HEK293 (cell line): ENCODE measurements at regions of chr22 and their contacts with region 1.

Region 1: DNA sequence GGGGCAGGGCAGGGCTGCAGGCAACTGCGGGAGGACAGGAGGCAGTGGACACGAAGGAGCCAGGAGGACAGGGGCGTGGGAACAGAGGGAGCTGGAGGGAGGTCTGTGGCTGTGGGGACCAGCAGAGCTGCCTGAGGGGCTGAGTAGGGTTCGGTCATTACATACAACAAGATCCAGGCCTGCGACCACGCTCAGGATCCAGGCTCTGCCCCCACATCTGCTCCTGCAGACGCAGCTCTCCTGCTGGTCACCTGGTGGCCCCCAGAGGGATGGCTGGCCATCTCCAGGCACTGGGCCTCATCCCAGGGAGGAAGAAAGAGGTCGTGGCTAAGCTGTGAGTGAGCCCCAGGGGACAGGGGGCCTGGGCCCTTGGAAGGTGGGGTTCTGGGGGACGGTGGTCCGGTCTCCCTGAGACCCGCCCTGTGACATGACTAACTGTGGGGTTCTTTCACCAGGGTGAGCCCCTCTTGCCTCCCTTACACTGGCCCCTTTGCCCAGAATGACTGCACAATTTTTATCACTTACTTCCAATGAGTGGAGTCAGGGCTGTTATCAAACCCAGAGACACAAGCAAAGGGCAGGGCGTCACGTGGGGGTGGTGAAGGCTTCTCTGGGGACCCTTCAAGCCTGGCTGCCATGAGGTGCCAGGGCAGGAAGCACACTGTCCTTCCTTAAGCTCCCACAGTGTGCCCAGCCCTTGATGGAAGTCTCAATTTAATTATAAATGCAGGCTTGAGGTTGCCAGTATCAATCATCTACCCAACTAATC is 6.7 kb upstream of the APOBEC3A start:
- H3K4me3 ChIP-seq: no peak overlapping the region
- H3K27ac ChIP-seq: no peak overlapping the region
- H3K4me1 ChIP-seq: no peaks in the 10 kb centered on the region
- CTCF ChIP-seq: no peak

Region 2: GRCh38 chr22:38973289-38974169 is 22.8 kb after region 1 on chr22:
- CTCF ChIA-PET with region 1: interaction called, 10 read pairs
- POLR2A ChIA-PET with region 1: no interaction called
- H3K4me3 ChIP-seq: no peak overlapping the region
- H3K27ac ChIP-seq: no peak overlapping the region
- H3K4me1 ChIP-seq: no peaks in the 10 kb centered on the region
- CTCF ChIP-seq: peak; percentile 77

Region 3: DNA sequence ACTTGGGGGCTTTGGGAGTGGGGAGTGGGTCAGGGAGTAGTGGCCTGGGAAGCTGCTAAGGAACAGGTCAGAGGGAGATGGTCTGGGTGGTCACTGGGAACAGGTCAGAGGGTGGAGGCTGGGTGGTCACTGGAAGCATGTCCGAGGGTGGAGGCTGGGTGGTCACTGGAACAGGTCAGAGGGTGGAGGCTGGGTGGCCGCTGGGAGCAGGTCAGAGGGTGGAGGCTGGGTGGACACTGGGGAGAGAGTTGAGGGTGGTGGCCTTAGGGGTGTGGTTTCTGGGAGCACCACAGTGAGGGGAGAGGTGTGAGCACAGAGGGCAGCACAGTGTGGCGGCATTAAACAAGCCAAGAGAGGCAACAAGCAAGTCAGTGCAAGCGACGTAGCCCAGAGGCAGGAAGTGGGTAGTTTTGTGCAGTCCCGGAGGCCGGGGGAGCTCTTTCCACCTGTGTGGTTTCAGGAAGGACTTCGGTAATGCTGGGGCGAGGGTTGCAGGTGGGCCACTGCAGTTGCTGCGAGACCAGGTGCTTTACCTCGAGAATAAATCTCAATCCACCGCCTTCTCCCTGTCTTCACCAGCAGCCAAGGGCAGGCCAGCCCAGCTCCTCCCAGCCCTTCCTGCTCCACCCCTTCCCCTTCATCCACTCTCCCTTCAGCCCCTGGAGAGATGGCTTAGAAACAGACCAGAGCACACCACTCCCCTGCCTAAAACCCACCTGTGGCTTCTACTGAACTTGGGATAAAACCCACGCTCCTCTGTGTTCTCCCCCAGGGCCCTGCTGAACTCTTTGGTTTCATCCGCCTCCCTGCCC is 616.6 kb after region 1 on chr22:
- CTCF ChIA-PET with region 1: no interaction called
- POLR2A ChIA-PET with region 1: no interaction called
- H3K4me3 ChIP-seq: no peak overlapping the region
- H3K27ac ChIP-seq: no peak overlapping the region
- H3K4me1 ChIP-seq: no peaks in the 10 kb centered on the region
- CTCF ChIP-seq: no peak